ENCODE measurements at regions of chr17 and their contacts with region 1.

Region 1: GRCh38 chr17:48724251-48725003 is 1.4 kb downstream of the PRAC2 start:
- DNase-seq: peak; percentile 69
- H3K4me3 ChIP-seq: no peak overlapping the region
- H3K27ac ChIP-seq: no peak overlapping the region
- H3K4me1 ChIP-seq: peaks cover 5% of the 10 kb centered on the region
- H3K27me3 ChIP-seq: peaks cover 93 to 98% of the 10 kb centered on the region in 2 experiments
- CTCF ChIP-seq: peak; percentile 74 to 81
- POLR2A ChIP-seq: no peak

Region 2: GRCh38 chr17:48704361-48705248 is 19.8 kb before region 1 on chr17:
- CTCF ChIA-PET with region 1: interaction called, 11 read pairs
- POLR2A ChIA-PET with region 1: no interaction called
- dilution Hi-C with region 1: no loop called
- intact Hi-C with region 1: no loop called
- DNase-seq: no peak
- H3K4me3 ChIP-seq: no peak overlapping the region
- H3K27ac ChIP-seq: no peak overlapping the region
- H3K4me1 ChIP-seq: no peaks in the 10 kb centered on the region
- H3K27me3 ChIP-seq: peaks cover 40 to 46% of the 10 kb centered on the region in 2 experiments
- CTCF ChIP-seq: no peak
- POLR2A ChIP-seq: no peak

Region 3: DNA sequence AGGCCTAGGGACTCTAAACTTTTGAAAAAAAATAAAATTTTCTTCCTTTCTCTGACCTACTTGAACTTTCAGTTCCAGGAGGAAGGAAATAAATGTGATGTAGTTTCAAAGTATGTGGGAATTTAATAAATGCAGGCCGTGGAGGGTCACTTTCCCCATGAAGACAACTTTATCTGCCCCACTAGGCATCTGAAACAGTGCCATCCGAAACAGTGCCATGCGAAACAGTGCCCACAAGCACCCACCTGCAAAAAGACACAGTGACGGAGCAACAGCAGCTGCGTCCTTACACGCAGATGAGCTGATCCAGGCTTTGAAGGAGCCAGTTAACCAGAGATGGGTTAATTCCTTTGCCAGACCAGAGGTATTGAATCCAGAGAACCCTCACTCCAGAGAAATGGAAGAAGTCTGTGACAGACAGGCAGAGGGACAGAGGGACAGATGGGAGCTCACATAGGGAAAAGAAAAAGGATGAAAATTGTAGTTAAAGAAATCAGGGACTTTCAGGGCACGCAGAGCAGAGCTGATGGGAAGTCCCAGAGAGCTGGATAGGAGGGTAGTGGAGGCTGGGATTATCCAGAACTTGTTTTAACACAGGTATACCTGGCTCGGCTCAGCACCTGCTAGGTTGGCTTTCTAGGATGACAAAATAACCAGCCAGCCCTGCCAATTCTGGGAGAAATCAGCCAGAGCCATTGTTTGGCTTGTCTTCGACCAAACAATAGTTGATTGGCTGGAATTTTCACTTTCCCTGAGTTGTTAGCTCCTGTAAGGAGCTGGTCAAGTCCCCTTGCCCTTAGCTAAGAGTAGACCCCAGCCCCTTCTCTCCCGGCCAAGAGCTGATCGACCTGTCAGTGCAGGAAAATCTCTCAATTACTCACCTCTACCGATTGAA is 21.2 kb after region 1 on chr17:
- CTCF ChIA-PET with region 1: interaction called, 35 read pairs
- POLR2A ChIA-PET with region 1: no interaction called
- dilution Hi-C with region 1: no loop called
- intact Hi-C with region 1: no loop called
- DNase-seq: no peak
- H3K4me3 ChIP-seq: no peak overlapping the region
- H3K27ac ChIP-seq: no peak overlapping the region
- H3K4me1 ChIP-seq: peaks cover 3% of the 10 kb centered on the region
- H3K27me3 ChIP-seq: peaks cover 81 to 98% of the 10 kb centered on the region in 2 experiments
- CTCF ChIP-seq: no peak
- POLR2A ChIP-seq: no peak

Region 4: DNA sequence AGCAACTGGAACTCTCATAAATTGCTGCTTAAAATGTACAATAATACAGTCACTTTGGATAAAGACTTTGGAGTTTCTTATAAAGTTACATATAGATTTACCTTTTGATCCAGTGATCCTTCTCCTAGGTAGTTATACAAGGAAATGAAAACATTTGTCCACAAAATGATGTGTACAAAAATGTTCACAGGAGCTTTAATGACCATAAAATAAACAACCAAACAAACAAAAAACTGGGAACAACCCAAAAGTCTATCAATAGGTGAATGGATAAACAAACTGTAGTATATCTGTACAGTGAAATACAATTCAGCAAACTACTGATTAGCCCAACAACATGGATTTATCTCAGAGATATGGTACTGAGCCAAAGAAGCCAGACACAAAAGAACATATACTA is 55.0 kb after region 1 on chr17:
- CTCF ChIA-PET with region 1: interaction called, 15 read pairs
- POLR2A ChIA-PET with region 1: no interaction called
- dilution Hi-C with region 1: no loop called
- intact Hi-C with region 1: no loop called
- DNase-seq: no peak
- H3K4me3 ChIP-seq: no peak overlapping the region
- H3K27ac ChIP-seq: no peak overlapping the region
- H3K4me1 ChIP-seq: no peaks in the 10 kb centered on the region
- H3K27me3 ChIP-seq: peaks cover 0 to 11% of the 10 kb centered on the region in 2 experiments
- CTCF ChIP-seq: no peak
- POLR2A ChIP-seq: no peak

Region 5: GRCh38 chr17:48804925-48805411 is 80.5 kb after region 1 on chr17:
- CTCF ChIA-PET with region 1: interaction called, 23 read pairs
- POLR2A ChIA-PET with region 1: no interaction called
- dilution Hi-C with region 1: no loop called
- intact Hi-C with region 1: no loop called
- DNase-seq: peak; percentile 47
- H3K4me3 ChIP-seq: no peak overlapping the region
- H3K27ac ChIP-seq: no peak overlapping the region
- H3K4me1 ChIP-seq: no peaks in the 10 kb centered on the region
- H3K27me3 ChIP-seq: peaks cover 2 to 5% of the 10 kb centered on the region in 2 experiments
- CTCF ChIP-seq: peak; percentile 87 to 94
- POLR2A ChIP-seq: no peak

Region 6: GRCh38 chr17:48830840-48831548 is 106.6 kb after region 1 on chr17 and contains the start of gene CALCOCO2:
- CTCF ChIA-PET with region 1: no interaction called
- POLR2A ChIA-PET with region 1: no interaction called
- dilution Hi-C with region 1: no loop called
- intact Hi-C with region 1: no loop called
- DNase-seq: peak; percentile 93
- H3K4me3 ChIP-seq: peak within 1 kb of the TSS; percentile 66 to 98 (median 74)
- H3K27ac ChIP-seq: peak within 1 kb of the TSS; percentile 59
- H3K4me1 ChIP-seq: peaks cover 2% of the 10 kb centered on the region
- H3K27me3 ChIP-seq: no peaks in the 10 kb centered on the region
- CTCF ChIP-seq: no peak
- POLR2A ChIP-seq: peak; percentile 40
- total RNA-seq, gene CALCOCO2: 52.1 and 64.9 TPM in 2 replicates